A673 (cell line): ENCODE measurements at regions of chr7 and their contacts with region 1.

Region 1: GRCh38 chr7:100563809-100564400 is 9.8 kb downstream of the SAP25 start:
- DNase-seq: peak; percentile 80
- H3K4me3 ChIP-seq: no peak overlapping the region
- H3K27ac ChIP-seq: no peak overlapping the region
- H3K4me1 ChIP-seq: no peaks in the 10 kb centered on the region
- H3K27me3 ChIP-seq: no peaks in the 10 kb centered on the region
- CTCF ChIP-seq: peak; percentile 95

Region 2: GRCh38 chr7:100691676-100692577 is 128.0 kb after region 1 on chr7:
- CTCF ChIA-PET with region 1: interaction called, 4 read pairs
- POLR2A ChIA-PET with region 1: no interaction called
- intact Hi-C with region 1: loop called (anchors 5 kb)
- DNase-seq: peak; percentile 89
- H3K4me3 ChIP-seq: peak overlapping the region; percentile 98
- H3K27ac ChIP-seq: peak overlapping the region; percentile 4
- H3K4me1 ChIP-seq: peaks cover 15% of the 10 kb centered on the region
- H3K27me3 ChIP-seq: no peaks in the 10 kb centered on the region
- CTCF ChIP-seq: peak; percentile 98

Region 3: DNA sequence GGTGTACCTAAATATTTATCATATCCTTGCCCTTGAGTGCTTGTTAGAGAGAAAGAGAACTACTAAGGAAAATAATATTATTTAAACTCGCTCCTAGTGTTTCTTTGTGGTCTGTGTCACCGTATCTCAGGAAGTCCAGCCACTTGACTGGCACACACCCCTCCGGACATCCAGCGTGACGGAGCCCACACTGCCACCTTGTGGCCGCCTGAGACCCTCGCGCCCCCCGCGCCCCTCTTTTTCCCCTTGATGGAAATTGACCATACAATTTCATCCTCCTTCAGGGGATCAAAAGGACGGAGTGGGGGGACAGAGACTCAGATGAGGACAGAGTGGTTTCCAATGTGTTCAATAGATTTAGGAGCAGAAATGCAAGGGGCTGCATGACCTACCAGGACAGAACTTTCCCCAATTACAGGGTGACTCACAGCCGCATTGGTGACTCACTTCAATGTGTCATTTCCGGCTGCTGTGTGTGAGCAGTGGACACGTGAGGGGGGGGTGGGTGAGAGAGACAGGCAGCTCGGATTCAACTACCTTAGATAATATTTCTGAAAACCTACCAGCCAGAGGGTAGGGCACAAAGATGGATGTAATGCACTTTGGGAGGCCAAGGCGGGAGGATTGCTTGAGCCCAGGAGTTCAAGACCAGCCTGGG is 574.4 kb after region 1 on chr7:
- CTCF ChIA-PET with region 1: no interaction called
- POLR2A ChIA-PET with region 1: no interaction called
- intact Hi-C with region 1: no loop called
- DNase-seq: peak; percentile 97
- H3K4me3 ChIP-seq: peak overlapping the region; percentile 20
- H3K27ac ChIP-seq: peak overlapping the region; percentile 70
- H3K4me1 ChIP-seq: peaks cover 43% of the 10 kb centered on the region
- H3K27me3 ChIP-seq: no peaks in the 10 kb centered on the region
- CTCF ChIP-seq: peak; percentile 93